ENCODE measurements at regions of chr3 and their contacts with region 1.

Region 1: GRCh38 chr3:32391643-32392535 is at the start of gene CMTM7:
- DNase-seq: peak; percentile 80 to 90 (median 89)
- ATAC-seq: peak; percentile 94
- H3K4me3 ChIP-seq: peak within 1 kb of the TSS; percentile 83
- H3K27ac ChIP-seq: peak within 1 kb of the TSS; percentile 83
- H3K4me1 ChIP-seq: no peaks in the 10 kb centered on the region
- H3K27me3 ChIP-seq: no peaks in the 10 kb centered on the region
- total RNA-seq, gene CMTM7: 5.7 to 8.4 (median 6.7) TPM

Region 2: DNA sequence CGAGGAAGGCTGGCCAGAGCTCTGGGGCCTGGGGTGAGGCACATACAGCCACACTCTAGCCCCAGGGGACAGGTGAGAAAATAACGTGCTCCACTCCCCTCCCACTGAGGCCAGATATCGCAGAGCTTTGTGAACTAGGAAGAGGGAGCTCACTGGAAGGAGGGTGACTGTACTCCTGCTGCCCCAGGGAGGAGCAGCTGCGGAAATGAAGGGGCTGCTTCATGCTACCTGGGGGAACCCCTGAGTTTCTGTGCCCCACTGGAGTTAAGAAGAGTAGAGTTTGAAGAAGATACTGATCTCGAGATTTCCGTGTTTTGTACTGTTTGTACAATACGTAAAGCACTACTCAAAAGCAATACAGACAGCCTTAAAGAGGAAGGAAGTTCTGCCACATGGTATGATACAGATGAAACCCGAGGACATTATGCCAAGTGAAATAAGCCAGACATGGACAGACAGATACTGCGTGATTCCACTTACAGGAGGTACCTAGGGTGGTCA is 66.1 kb after region 1 on chr3:
- intact Hi-C with region 1: loop called in 1 of 4 experiments (anchors 10 kb)
- DNase-seq: no peak
- ATAC-seq: peak; percentile 41 to 48
- H3K4me3 ChIP-seq: no peak overlapping the region
- H3K27ac ChIP-seq: no peak overlapping the region
- H3K4me1 ChIP-seq: peaks cover 2% of the 10 kb centered on the region
- H3K27me3 ChIP-seq: no peaks in the 10 kb centered on the region